GM18951 (cell line): ENCODE measurements at regions of chr10 and their contacts with region 1.

Region 1: GRCh38 chr10:97210543-97210961 is 24.8 kb upstream of the SLIT1 start:
- POLR2A ChIP-seq: no peak

Region 2: DNA sequence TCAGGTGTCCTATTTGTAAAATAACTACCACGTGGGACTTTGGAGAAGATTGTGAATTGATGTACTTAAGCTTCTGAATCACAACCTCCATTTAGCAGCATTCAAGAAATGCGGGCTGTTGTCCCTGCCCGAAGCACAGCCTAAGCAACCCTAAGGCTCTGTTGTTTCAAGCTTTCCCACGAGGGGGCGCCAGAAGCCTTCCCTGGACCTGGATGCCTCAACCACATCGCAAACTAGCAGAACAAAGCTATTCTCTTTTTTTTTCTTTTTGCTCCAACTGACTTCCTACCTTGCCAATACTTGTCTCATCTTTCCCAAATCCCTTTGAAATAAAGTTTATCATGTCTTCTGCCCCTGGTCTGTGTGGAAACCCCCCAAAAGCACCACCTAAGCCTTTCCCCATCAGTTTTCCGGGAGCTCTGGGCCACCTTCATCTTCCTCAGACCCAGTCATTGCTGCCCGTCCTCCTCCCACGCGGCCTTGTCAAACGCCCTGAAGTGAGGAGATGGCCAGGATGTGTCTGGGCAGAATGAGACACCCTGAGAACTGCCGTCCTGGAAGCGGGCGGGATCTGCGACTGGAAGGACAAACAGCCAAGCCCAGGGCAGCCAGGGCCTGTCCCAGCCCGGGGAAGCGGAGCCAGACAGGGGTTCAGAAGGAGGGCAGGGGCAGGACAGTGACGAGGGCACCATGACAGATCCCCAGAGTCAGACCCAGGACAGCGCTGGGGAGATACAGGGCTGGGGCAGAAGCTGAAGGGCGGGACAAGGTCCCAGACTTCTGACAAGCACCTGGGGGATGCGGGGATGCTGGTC is 137.5 kb before region 1 on chr10:
- in situ Hi-C with region 1: loop called (anchors 10 kb)
- POLR2A ChIP-seq: no peak